ENCODE measurements at regions of chr9 and their contacts with region 1.

Region 1: GRCh38 chr9:68500457-68501381 is 40.0 kb downstream of the TMEM252 start:
- DNase-seq: peak in 1 of 2 donors; percentile 81
- H3K4me3 ChIP-seq: peak overlapping the region in 1 of 2 donors; percentile 23
- H3K27ac ChIP-seq: peak overlapping the region; percentile 88 to 94
- H3K4me1 ChIP-seq: peaks cover 4 to 35% of the 10 kb centered on the region in 2 donors
- H3K27me3 ChIP-seq: no peaks in the 10 kb centered on the region
- CTCF ChIP-seq: no peak

Region 2: DNA sequence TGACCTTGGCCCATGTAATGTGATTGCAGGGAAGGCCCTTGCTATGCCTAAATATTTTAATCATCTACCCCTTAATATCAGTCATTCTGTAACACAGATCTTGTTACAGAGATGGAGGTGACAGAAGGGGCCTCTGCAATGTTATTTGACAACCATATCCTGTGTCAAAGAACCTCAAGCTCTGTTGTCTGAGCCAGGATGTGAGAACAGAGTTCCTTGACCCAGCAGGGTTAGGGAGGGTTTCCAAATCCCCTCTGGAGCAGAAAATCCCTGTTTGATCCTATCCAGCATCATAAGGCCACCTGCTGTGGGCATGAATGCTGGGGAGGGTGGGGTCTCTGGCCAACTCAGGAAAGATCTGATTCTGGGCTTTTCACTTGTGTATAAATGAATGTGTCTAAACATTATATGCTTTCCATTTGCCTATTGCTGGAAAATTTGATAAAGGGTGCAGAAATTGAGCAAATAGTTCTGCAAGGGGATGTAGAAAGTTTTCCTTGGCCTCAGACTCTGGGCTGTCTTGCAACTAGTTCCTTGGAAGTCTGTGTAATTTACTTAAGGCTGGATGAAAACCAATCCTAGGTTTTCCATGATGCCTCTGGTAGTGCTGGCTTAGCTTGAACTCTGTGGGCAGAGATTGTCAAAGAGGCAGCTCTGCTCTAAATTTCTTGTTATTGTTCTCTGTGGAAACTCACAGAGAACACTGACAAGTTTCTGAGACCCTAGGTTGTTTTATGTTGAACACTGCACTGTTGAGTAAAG is 73.3 kb before region 1 on chr9:
- intact Hi-C with region 1: loop called (anchors 5 kb)
- DNase-seq: no peak
- H3K4me3 ChIP-seq: no peak overlapping the region
- H3K27ac ChIP-seq: peak overlapping the region; percentile 63 to 80
- H3K4me1 ChIP-seq: peaks cover 10 to 30% of the 10 kb centered on the region in 2 donors
- H3K27me3 ChIP-seq: no peaks in the 10 kb centered on the region
- CTCF ChIP-seq: no peak

Region 3: GRCh38 chr9:68538200-68538599 is 37.5 kb after region 1 on chr9:
- intact Hi-C with region 1: loop called (anchors 1 kb)
- DNase-seq: peak in 1 of 2 donors; percentile 79
- H3K4me3 ChIP-seq: no peak overlapping the region
- H3K27ac ChIP-seq: peak overlapping the region; percentile 72 to 88
- H3K4me1 ChIP-seq: peaks cover 0 to 16% of the 10 kb centered on the region in 2 donors
- H3K27me3 ChIP-seq: no peaks in the 10 kb centered on the region
- CTCF ChIP-seq: no peak

Measured in ascending aorta (tissue), 2 donors.